B cell (primary cell): ENCODE measurements at regions of chr6 and their contacts with region 1.

Region 1: DNA sequence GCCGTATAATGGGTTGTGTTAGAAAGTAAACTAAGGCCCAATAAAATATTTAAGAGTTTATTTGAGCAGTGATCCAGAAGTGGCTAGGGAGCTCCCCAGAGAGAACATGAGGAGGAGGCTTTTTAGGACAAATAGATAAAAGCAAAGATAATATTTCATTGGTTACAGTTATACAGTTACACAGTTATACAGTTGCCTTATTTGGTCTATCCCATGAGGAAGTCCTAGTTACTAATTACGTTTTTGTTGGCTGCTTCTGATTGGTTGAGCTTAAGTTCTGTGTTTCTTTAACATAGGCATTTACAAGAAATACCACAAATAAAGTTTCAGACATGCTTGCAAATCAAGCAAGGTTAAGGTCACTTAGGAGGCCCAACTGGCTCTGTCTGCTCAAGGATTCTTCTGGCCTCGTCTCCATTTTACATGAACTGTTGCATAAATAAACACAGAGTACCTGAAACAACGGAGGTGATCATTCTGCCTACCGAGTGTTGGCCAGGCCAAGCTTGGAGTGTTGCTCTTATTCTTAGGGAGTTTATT is 7.0 kb downstream of the UBD start:
- DNase-seq: peak; percentile 87
- ATAC-seq: peak; percentile 84
- H3K4me3 ChIP-seq: peak overlapping the region; percentile 22 to 60 (median 48)
- H3K4me3 Mint-ChIP-seq: peak overlapping the region; percentile 95
- H3K27ac ChIP-seq: no peak overlapping the region
- H3K27ac Mint-ChIP-seq: no peak overlapping the region
- H3K4me1 ChIP-seq: peaks cover 15 to 20% of the 10 kb centered on the region in 2 donors
- H3K4me1 Mint-ChIP-seq: peaks cover 17% of the 10 kb centered on the region
- H3K27me3 ChIP-seq: peaks cover 0 to 36% (median 22%) of the 10 kb centered on the region in 4 experiments
- H3K27me3 Mint-ChIP-seq: peaks cover 36% of the 10 kb centered on the region
- CTCF ChIP-seq: no peak

Region 2: GRCh38 chr6:29632789-29633533 is 80.4 kb after region 1 on chr6 and contains the start of gene GABBR1:
- CTCF ChIA-PET with region 1: no interaction called
- POLR2A ChIA-PET with region 1: no interaction called
- intact Hi-C with region 1: loop called (anchors 5 kb)
- DNase-seq: peak; percentile 78
- ATAC-seq: peak; percentile 82
- H3K4me3 ChIP-seq: peak within 1 kb of the TSS; percentile 45 to 96 (median 93)
- H3K4me3 Mint-ChIP-seq: peak within 1 kb of the TSS; percentile 94
- H3K27ac ChIP-seq: peak within 1 kb of the TSS; percentile 86
- H3K27ac Mint-ChIP-seq: peak within 1 kb of the TSS; percentile 99
- H3K4me1 ChIP-seq: peaks cover 33 to 63% of the 10 kb centered on the region in 2 donors
- H3K4me1 Mint-ChIP-seq: peaks cover 68% of the 10 kb centered on the region
- H3K27me3 ChIP-seq: no peaks in the 10 kb centered on the region
- H3K27me3 Mint-ChIP-seq: no peaks in the 10 kb centered on the region
- CTCF ChIP-seq: no peak
- total RNA-seq, gene GABBR1: 188 and 198 TPM in 2 replicates